Activated B cell treated with CpG ODN at 0.5 μM for 24 hours (primary cell): ENCODE measurements at regions of chr3 and their contacts with region 1.

Region 1: DNA sequence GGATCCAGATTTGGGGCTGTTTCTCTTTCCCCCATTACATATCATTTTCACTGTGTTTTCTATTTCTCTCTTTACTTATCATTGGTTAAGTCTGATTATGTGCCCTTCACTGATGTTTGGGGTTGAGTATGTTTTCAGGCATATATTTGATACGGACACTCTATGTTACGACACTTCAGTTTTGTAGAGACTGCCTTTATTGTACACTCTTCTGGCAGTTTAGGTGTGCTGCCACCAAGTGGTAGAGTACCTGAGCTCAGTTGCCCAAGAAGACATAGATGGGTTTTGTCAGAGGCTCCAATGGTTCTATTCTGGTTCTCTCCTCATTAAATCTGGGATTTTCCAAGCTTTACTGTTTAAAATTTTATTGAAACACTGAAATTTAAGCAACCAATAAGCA is 255.0 kb upstream of the ROPN1 start:
- DNase-seq: no peak
- ATAC-seq: no peak
- H3K4me3 Mint-ChIP-seq: no peak overlapping the region
- H3K27ac Mint-ChIP-seq: no peak overlapping the region
- H3K4me1 Mint-ChIP-seq: no peaks in the 10 kb centered on the region
- H3K27me3 Mint-ChIP-seq: peaks cover 21% of the 10 kb centered on the region
- CTCF ChIP-seq: no peak

Region 2: DNA sequence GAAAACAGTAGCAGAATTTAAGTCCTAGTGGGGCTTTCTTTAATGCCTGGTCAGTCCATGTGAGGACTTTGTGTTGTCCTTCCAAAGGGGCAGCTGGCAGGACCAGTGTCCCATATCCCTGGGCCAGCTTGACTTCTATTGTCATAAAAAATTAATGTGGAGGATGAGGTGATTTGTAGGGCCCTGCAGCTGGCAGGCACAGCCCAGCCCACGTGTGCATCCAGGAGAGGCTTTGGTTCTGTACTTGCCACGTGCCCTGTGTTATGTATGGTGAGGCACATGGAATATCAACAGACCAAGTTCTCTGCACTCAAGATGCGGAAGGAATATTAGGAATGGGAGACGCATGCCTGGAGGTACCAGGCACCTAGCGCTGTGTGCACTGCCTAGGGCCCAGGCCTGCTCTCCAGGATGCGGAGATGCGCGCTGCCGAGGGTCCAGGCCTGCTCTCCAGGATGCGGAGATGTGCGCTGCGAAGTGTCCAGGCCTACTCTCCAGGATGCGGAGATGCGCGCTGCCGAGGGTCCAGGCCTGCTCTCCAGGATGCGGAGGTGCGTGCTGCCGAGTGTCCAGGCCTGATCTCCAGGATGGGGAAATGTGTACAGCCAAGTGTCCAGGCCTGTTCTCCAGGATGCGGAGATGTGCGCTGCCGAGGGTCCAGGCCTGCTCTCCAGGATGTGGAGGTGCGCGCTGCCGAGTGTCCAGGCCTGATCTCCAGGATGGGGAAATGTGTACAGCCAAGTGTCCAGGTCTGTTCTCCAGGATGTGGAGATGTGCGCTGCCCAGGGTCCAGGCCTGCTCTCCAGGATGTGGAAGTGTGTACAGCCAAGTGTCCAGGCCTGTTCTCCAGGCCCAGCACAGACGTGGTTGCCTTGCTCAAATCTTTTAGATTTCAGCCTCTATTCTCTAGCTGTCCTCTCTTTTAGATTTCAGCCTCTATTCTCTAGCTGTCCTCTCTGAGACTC is 71.8 kb before region 1 on chr3:
- CTCF ChIA-PET with region 1: no interaction called
- POLR2A ChIA-PET with region 1: no interaction called
- intact Hi-C with region 1: loop called (anchors 10 kb)
- DNase-seq: no peak
- ATAC-seq: no peak
- H3K4me3 Mint-ChIP-seq: no peak overlapping the region
- H3K27ac Mint-ChIP-seq: no peak overlapping the region
- H3K4me1 Mint-ChIP-seq: no peaks in the 10 kb centered on the region
- H3K27me3 Mint-ChIP-seq: no peaks in the 10 kb centered on the region
- CTCF ChIP-seq: no peak

Region 3: DNA sequence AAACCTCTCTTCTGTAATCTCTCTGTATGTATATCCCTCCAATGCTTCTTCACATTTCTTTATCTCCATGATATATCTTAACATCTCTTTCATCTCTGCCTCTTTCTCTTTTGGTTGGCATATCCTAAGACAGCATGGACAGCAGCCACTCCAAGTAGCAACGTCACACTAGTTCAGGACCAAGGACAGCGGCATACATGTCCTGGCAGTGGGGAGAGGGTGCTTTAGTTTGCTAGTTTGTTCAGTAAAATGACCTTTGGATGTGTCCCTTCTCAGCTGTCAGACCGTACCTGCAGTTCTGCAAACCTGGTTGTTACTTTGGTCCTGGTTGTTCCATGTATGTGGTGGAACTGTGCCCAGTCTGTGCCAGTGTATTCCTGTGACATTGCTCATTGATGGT is 29.4 kb before region 1 on chr3:
- CTCF ChIA-PET with region 1: no interaction called
- POLR2A ChIA-PET with region 1: no interaction called
- intact Hi-C with region 1: no loop called
- DNase-seq: no peak
- ATAC-seq: no peak
- H3K4me3 Mint-ChIP-seq: no peak overlapping the region
- H3K27ac Mint-ChIP-seq: no peak overlapping the region
- H3K4me1 Mint-ChIP-seq: no peaks in the 10 kb centered on the region
- H3K27me3 Mint-ChIP-seq: peaks cover 4% of the 10 kb centered on the region
- CTCF ChIP-seq: no peak

Region 4: GRCh38 chr3:124395584-124396338 is 148.8 kb after region 1 on chr3:
- CTCF ChIA-PET with region 1: no interaction called
- POLR2A ChIA-PET with region 1: no interaction called
- intact Hi-C with region 1: no loop called
- DNase-seq: no peak
- ATAC-seq: no peak
- H3K4me3 Mint-ChIP-seq: no peak overlapping the region
- H3K27ac Mint-ChIP-seq: no peak overlapping the region
- H3K4me1 Mint-ChIP-seq: no peaks in the 10 kb centered on the region
- H3K27me3 Mint-ChIP-seq: peaks cover 14% of the 10 kb centered on the region
- CTCF ChIP-seq: no peak